ENCODE measurements at regions of chr10 and their contacts with region 1.

Region 1: DNA sequence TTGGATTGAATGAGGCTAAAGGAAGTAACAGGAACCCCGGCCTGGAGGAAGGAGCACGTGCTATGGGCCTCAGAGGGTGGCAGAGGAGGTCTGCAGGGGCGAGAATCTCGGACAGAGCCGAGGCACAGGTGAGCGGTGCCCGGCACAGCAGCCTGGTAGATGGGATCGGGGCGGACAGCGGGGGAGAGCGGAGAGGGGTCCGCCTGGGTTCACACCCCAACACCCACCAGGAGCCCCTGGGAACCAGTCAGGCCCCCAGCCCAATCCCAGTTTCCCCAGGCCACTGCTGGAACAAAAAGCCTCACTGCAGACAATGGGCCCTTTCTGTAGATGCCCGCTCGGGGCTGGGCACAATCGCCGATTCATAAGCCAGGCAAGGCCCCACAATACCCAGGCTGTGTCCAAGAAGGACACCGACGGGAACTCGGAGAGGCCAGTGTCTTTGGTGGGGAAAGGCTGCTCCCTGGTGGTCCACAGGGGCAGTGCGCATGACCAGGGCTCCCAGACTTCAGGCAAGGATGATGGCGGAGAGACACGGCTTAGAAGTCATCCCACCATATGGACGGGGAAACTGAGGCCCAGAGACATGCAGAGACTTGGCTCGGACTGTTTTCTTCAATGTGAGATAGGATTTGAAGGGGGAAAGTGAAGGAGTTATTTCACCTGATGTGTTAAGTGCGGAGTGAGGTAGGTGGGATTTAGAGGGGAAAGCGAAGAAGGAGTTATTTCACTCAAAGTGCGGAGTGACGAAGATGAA is 106.9 kb upstream of the GPR26 start:
- DNase-seq: peak; percentile 72

Region 2: DNA sequence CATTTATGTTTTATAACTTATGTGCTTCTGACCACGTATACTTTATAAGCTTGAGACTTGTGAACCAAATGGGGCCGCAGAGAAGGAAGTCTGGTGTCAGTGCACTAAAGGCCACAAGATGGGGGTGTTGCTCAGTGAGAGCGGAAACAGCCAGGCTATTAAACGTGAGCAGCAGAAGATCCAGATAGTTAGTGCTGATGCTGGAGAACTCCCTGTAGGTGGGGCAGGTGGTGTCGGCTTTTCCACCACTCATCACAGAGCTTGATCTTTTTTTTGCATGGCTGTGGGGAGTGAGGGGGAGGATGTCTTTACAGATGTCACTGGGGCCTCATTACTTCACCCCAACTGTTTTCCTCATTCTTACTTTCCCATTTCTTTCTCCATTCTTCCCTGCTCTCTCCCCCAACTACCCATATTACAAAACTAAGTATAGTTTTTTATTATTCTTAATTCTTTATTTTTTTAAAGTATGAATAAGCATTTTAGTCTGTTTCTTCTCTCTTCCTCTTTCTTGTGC is 515.8 kb before region 1 on chr10:
- in situ Hi-C with region 1: loop called (anchors 25 kb)
- DNase-seq: peak; percentile 77

Region 3: GRCh38 chr10:123132576-123133477 is 426.4 kb before region 1 on chr10:
- in situ Hi-C with region 1: loop called (anchors 25 kb)
- DNase-seq: peak; percentile 91

Region 4: DNA sequence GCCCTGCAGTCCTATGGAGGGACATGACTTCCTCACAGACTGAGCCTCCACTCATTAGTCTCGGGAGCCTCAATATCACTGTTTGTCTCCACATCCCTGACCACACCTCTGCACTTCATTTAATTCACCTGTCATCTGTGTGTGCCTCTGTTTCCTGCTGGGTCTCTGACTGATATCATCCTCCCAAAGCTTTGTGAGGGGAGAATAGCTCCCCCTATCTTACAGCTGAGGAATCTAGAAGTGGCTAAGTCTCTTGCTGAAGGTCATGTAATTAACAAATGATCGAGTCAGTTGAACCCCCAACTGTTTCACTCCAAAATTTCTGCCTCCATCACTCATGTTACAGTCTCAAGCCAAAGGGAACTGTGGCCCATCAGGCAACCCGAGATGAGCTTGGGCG is 337.9 kb after region 1 on chr10:
- in situ Hi-C with region 1: no loop called
- DNase-seq: no peak

Measured in KBM-7 (cell line).